B cell (primary cell): ENCODE measurements at regions of chr2 and their contacts with region 1.

Region 1: GRCh38 chr2:3379647-3380534 is at the start of gene TRAPPC12:
- DNase-seq: peak; percentile 94
- ATAC-seq: peak; percentile 77
- H3K4me3 ChIP-seq: peak within 1 kb of the TSS; percentile 75 to 88 (median 84)
- H3K4me3 Mint-ChIP-seq: peak within 1 kb of the TSS; percentile 98
- H3K27ac ChIP-seq: peak within 1 kb of the TSS; percentile 90
- H3K27ac Mint-ChIP-seq: peak within 1 kb of the TSS; percentile 96
- H3K4me1 ChIP-seq: peaks cover 32 to 37% of the 10 kb centered on the region in 2 donors
- H3K4me1 Mint-ChIP-seq: peaks cover 43% of the 10 kb centered on the region
- H3K27me3 ChIP-seq: no peaks in the 10 kb centered on the region
- H3K27me3 Mint-ChIP-seq: no peaks in the 10 kb centered on the region
- CTCF ChIP-seq: peak; percentile 60
- total RNA-seq, gene TRAPPC12: 151 and 154 TPM in 2 replicates

Region 2: GRCh38 chr2:2735041-2735440 is 644.9 kb before region 1 on chr2:
- CTCF ChIA-PET with region 1: no interaction called
- POLR2A ChIA-PET with region 1: no interaction called
- intact Hi-C with region 1: no loop called
- DNase-seq: no peak
- ATAC-seq: no peak
- H3K4me3 ChIP-seq: no peak overlapping the region
- H3K4me3 Mint-ChIP-seq: no peak overlapping the region
- H3K27ac ChIP-seq: no peak overlapping the region
- H3K27ac Mint-ChIP-seq: no peak overlapping the region
- H3K4me1 ChIP-seq: no peaks in the 10 kb centered on the region
- H3K4me1 Mint-ChIP-seq: no peaks in the 10 kb centered on the region
- H3K27me3 ChIP-seq: no peaks in the 10 kb centered on the region
- H3K27me3 Mint-ChIP-seq: peaks cover 3% of the 10 kb centered on the region
- CTCF ChIP-seq: no peak

Region 3: GRCh38 chr2:3396920-3397559 is 17.1 kb after region 1 on chr2:
- CTCF ChIA-PET with region 1: interaction called, 8 read pairs
- POLR2A ChIA-PET with region 1: no interaction called
- intact Hi-C with region 1: loop called (anchors 2 kb)
- DNase-seq: no peak
- ATAC-seq: no peak
- H3K4me3 ChIP-seq: no peak overlapping the region
- H3K4me3 Mint-ChIP-seq: no peak overlapping the region
- H3K27ac ChIP-seq: no peak overlapping the region
- H3K27ac Mint-ChIP-seq: no peak overlapping the region
- H3K4me1 ChIP-seq: no peaks in the 10 kb centered on the region
- H3K4me1 Mint-ChIP-seq: no peaks in the 10 kb centered on the region
- H3K27me3 ChIP-seq: no peaks in the 10 kb centered on the region
- H3K27me3 Mint-ChIP-seq: no peaks in the 10 kb centered on the region
- CTCF ChIP-seq: no peak

Region 4: GRCh38 chr2:3518496-3519254 is 138.8 kb after region 1 on chr2:
- CTCF ChIA-PET with region 1: interaction called, 3 read pairs
- POLR2A ChIA-PET with region 1: interaction called, 19 read pairs
- intact Hi-C with region 1: loop called (anchors 1 kb)
- DNase-seq: peak; percentile 99
- ATAC-seq: peak; percentile 76
- H3K4me3 ChIP-seq: peak overlapping the region; percentile 52 to 87 (median 79)
- H3K4me3 Mint-ChIP-seq: peak overlapping the region; percentile 96
- H3K27ac ChIP-seq: peak overlapping the region; percentile 73 to 93
- H3K27ac Mint-ChIP-seq: peak overlapping the region; percentile 97
- H3K4me1 ChIP-seq: peaks cover 18 to 25% of the 10 kb centered on the region in 2 donors
- H3K4me1 Mint-ChIP-seq: peaks cover 38% of the 10 kb centered on the region
- H3K27me3 ChIP-seq: no peaks in the 10 kb centered on the region
- H3K27me3 Mint-ChIP-seq: no peaks in the 10 kb centered on the region
- CTCF ChIP-seq: no peak

Region 5: GRCh38 chr2:3545788-3546478 is 166.0 kb after region 1 on chr2:
- CTCF ChIA-PET with region 1: no interaction called
- POLR2A ChIA-PET with region 1: no interaction called
- intact Hi-C with region 1: no loop called
- DNase-seq: no peak
- ATAC-seq: no peak
- H3K4me3 ChIP-seq: no peak overlapping the region
- H3K4me3 Mint-ChIP-seq: no peak overlapping the region
- H3K27ac ChIP-seq: no peak overlapping the region
- H3K27ac Mint-ChIP-seq: no peak overlapping the region
- H3K4me1 ChIP-seq: no peaks in the 10 kb centered on the region
- H3K4me1 Mint-ChIP-seq: no peaks in the 10 kb centered on the region
- H3K27me3 ChIP-seq: no peaks in the 10 kb centered on the region
- H3K27me3 Mint-ChIP-seq: no peaks in the 10 kb centered on the region
- CTCF ChIP-seq: no peak

Region 6: DNA sequence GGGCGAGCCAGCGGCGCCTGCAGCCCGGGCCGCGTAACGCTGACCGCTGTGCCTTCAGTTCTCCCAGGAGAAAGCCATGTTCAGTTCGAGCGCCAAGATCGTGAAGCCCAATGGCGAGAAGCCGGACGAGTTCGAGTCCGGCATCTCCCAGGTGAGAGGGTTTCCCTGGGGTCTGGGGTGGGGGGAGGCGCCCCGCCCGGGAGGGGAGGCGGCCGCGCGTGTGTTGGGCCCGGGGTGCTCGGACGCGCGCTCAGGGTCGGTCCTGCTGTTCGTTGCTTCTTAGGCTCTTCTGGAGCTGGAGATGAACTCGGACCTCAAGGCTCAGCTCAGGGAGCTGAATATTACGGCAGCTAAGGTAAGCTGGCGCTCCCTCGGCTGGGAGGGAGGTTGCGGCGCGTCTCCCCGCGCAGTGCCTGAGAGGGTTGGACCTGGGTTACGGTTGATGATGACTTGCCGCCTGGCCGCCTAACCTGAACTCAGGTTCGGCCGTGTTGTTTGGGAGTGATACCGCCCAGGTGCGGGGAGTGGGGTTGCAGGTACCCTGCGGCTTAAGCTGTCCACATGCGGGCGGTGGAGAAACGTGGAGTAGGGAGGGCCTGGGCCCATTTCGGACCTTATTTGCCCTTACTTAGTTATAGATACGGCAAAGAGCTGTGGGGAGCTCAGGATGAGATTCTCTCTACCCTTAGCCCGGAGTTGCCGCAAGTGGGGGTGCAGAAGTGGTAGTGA is 195.8 kb after region 1 on chr2:
- CTCF ChIA-PET with region 1: interaction called, 3 read pairs
- POLR2A ChIA-PET with region 1: interaction called, 4 read pairs
- intact Hi-C with region 1: loop called (anchors 1 kb)
- DNase-seq: no peak
- ATAC-seq: peak; percentile 43
- H3K4me3 ChIP-seq: peak overlapping the region; percentile 70 to 89 (median 78)
- H3K4me3 Mint-ChIP-seq: peak overlapping the region; percentile 87
- H3K27ac ChIP-seq: peak overlapping the region; percentile 92 to 95
- H3K27ac Mint-ChIP-seq: peak overlapping the region; percentile 93
- H3K4me1 ChIP-seq: peaks cover 15 to 27% of the 10 kb centered on the region in 2 donors
- H3K4me1 Mint-ChIP-seq: peaks cover 39% of the 10 kb centered on the region
- H3K27me3 ChIP-seq: no peaks in the 10 kb centered on the region
- H3K27me3 Mint-ChIP-seq: no peaks in the 10 kb centered on the region
- CTCF ChIP-seq: no peak